ENCODE measurements at regions of chr5 and their contacts with region 1.

Region 1: GRCh38 chr5:58469896-58470295 is 10.0 kb upstream of the PLK2 start:
- DNase-seq: no peak
- H3K4me3 ChIP-seq: no peak overlapping the region
- H3K27ac ChIP-seq: no peak overlapping the region
- H3K4me1 ChIP-seq: no peaks in the 10 kb centered on the region
- H3K27me3 ChIP-seq: no peaks in the 10 kb centered on the region
- CTCF ChIP-seq: no peak
- POLR2A ChIP-seq: no peak

Region 2: GRCh38 chr5:57517250-57517649 is 952.6 kb before region 1 on chr5:
- intact Hi-C with region 1: loop called (anchors 5 kb)
- DNase-seq: no peak
- H3K4me3 ChIP-seq: no peak overlapping the region
- H3K27ac ChIP-seq: no peak overlapping the region
- H3K4me1 ChIP-seq: no peaks in the 10 kb centered on the region
- H3K27me3 ChIP-seq: no peaks in the 10 kb centered on the region
- CTCF ChIP-seq: no peak
- POLR2A ChIP-seq: no peak